ENCODE measurements at regions of chr7 and their contacts with region 1.

Region 1: DNA sequence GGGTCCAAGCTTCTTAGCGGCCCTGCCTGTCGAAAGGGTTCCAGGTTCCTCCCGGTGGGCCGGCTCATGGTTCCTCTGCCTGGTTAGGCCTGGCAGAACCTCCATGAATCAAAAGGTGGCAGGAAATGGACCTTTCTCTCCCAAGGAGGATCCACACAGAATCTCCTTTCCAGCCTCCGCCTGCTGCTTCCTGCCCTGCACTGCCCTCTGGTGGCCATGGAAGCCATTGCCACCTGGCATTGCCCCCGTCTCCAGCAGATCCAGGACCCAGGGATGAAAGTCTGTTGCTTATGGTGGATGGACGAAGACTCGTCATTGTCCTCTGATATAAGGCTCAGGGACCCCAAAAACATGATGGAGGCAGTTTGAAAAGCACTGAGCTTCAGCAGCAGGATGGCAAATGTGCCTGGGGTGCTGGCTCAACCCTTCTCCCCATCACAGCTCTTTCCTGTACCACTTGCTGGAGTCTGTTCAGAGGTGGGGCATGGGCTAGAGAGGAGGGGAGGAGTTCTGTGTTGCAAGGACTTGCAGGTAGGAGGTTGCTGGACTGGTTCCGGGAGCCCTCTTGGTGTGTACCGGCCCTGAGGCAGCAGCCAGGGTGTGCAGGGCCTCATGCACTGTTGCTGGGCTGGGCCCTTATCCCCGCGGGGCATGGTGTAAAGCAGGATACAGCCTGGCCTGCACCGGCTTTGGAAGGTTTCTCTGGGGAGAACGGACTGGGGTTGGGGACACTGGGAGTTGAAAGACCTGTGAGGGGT is 11.3 kb upstream of the INMT start:
- DNase-seq: peak; percentile 38
- H3K4me3 ChIP-seq: no peak overlapping the region
- H3K27ac ChIP-seq: no peak overlapping the region
- H3K4me1 ChIP-seq: no peaks in the 10 kb centered on the region
- H3K27me3 ChIP-seq: no peaks in the 10 kb centered on the region
- CTCF ChIP-seq: peak; percentile 99 to 100

Region 2: DNA sequence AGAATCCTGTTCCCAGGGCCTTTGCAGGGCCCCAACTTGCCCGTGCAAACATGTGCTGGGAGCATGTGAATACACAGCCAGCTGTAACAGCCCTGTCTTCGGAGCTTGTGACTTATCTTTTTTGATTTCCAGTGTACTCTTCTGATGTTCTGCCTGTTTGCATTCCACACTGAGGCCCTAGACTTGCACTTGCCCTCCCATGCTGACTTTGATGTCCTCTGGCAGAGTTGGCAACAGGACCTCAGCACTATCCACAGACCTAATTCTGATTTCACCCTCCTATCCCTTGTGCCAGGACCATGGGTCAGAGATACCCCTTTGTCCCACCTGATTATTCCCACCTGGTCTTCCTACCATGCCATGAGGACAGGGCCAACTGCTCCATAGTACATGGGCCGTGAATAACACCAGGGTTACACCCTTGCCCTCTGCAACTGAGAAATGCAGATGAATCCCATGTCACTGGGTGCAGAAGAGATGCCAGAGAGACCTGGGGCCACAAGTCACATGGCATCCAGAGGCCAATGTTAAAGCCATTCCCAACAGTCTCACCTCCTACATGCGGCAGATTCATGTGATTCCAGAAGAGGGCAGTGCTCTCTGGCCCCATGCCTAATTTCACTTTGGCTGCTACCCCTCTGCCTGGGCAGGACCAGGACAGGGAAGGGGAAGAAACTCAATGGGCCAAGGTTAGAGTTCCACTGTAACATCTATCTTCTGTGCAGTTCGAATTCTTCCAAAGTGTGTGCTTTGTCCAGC is 794.0 kb before region 1 on chr7:
- CTCF ChIA-PET with region 1: no interaction called
- dilution Hi-C with region 1: no loop called
- in situ Hi-C with region 1: no loop called
- intact Hi-C with region 1: no loop called
- DNase-seq: no peak
- H3K4me3 ChIP-seq: no peak overlapping the region
- H3K27ac ChIP-seq: no peak overlapping the region
- H3K4me1 ChIP-seq: peaks cover 13% of the 10 kb centered on the region
- H3K27me3 ChIP-seq: no peaks in the 10 kb centered on the region
- CTCF ChIP-seq: peak in 1 of 2 donors; percentile 42

Region 3: GRCh38 chr7:30510124-30511075 is 230.2 kb before region 1 on chr7:
- CTCF ChIA-PET with region 1: no interaction called
- dilution Hi-C with region 1: no loop called
- in situ Hi-C with region 1: no loop called
- intact Hi-C with region 1: loop called (anchors 1 kb)
- DNase-seq: peak; percentile 33
- H3K4me3 ChIP-seq: no peak overlapping the region
- H3K27ac ChIP-seq: no peak overlapping the region
- H3K4me1 ChIP-seq: peaks cover 13% of the 10 kb centered on the region
- H3K27me3 ChIP-seq: no peaks in the 10 kb centered on the region
- CTCF ChIP-seq: peak; percentile 80 to 92

Region 4: GRCh38 chr7:30594549-30595435 is 145.8 kb before region 1 on chr7 and contains the start of gene GARS1:
- CTCF ChIA-PET with region 1: no interaction called
- dilution Hi-C with region 1: no loop called
- in situ Hi-C with region 1: loop called in 1 of 2 experiments (anchors 5 kb)
- intact Hi-C with region 1: no loop called
- DNase-seq: peak; percentile 90
- H3K4me3 ChIP-seq: peak within 1 kb of the TSS; percentile 91 to 97 (median 93)
- H3K27ac ChIP-seq: peak within 1 kb of the TSS; percentile 92
- H3K4me1 ChIP-seq: peaks cover 8% of the 10 kb centered on the region
- H3K27me3 ChIP-seq: no peaks in the 10 kb centered on the region
- CTCF ChIP-seq: no peak
- total RNA-seq, gene GARS1: 419 to 470 TPM

Region 5: GRCh38 chr7:30650421-30650808 is 90.2 kb before region 1 on chr7:
- CTCF ChIA-PET with region 1: no interaction called
- dilution Hi-C with region 1: no loop called
- in situ Hi-C with region 1: no loop called
- intact Hi-C with region 1: loop called (anchors 5 kb)
- DNase-seq: no peak
- H3K4me3 ChIP-seq: no peak overlapping the region
- H3K27ac ChIP-seq: no peak overlapping the region
- H3K4me1 ChIP-seq: no peaks in the 10 kb centered on the region
- H3K27me3 ChIP-seq: no peaks in the 10 kb centered on the region
- CTCF ChIP-seq: no peak

Region 6: DNA sequence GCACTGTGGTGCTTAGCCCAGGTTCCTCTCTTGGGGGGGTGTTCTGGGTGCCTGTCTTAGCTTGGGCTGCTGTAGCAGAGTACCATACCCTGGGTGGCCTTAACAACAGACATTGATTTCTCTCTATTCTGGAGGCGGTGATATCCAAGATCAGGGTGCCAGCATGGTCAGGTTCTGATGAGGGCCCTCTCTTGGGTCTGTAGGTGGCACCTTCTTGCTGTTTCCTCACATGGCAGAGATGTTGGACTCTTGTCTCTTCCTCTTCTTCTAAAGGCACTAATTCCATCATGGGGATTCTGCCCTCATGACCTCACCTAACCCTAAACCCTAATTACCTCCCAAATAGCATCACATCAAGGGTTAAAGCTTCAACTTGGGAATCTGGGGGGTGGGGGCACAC is 38.4 kb before region 1 on chr7:
- CTCF ChIA-PET with region 1: no interaction called
- dilution Hi-C with region 1: no loop called
- in situ Hi-C with region 1: no loop called
- intact Hi-C with region 1: loop called (anchors 1 kb)
- DNase-seq: no peak
- H3K4me3 ChIP-seq: no peak overlapping the region
- H3K27ac ChIP-seq: no peak overlapping the region
- H3K4me1 ChIP-seq: no peaks in the 10 kb centered on the region
- H3K27me3 ChIP-seq: no peaks in the 10 kb centered on the region
- CTCF ChIP-seq: peak; percentile 16 to 45

Region 7: DNA sequence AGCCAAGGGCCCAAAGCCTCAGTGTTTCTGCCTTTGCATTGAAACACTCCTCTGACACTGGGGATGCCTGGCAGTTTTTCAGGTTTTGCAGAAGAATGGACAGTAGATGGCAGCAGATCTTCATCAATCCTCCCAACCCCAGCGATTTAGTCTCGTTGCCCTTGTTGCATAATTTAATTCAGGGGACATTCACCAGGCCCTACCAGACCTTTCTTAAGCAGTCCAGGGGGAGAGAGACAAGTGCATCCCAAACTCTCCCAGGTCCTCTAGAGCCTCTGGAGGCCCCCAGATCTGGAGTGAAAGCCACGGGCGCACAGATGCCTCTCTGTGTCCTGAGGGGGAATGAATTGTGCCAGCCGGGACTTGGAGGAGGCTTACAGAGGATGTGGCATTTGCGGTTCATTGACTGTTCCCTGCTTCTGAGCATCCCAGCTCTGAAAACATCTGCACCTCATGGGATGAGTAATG is 60.2 kb after region 1 on chr7:
- CTCF ChIA-PET with region 1: no interaction called
- dilution Hi-C with region 1: no loop called
- in situ Hi-C with region 1: no loop called
- intact Hi-C with region 1: loop called (anchors 1 kb)
- DNase-seq: peak; percentile 86
- H3K4me3 ChIP-seq: no peak overlapping the region
- H3K27ac ChIP-seq: peak overlapping the region; percentile 24
- H3K4me1 ChIP-seq: peaks cover 75% of the 10 kb centered on the region
- H3K27me3 ChIP-seq: no peaks in the 10 kb centered on the region
- CTCF ChIP-seq: peak; percentile 71 to 72

Region 8: DNA sequence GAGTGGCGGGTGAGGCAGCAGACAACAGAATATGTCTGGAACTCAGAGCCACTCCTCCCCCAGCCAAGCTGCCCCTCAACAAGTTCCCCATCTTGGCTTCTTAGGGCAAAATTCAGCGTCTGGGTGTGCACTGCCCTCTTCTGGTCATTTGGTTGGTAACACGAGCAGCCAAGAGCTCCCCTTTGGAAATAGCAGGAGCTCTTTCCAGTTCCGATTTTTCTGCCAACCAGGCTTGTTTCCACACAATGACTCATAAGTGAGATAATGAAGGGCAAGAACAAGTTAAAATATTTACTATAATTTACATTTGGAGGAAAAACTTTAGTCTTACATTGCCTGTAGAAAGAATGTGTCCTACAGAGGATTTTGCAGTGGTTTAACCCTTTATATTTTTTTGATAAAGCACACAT is 382.1 kb after region 1 on chr7:
- CTCF ChIA-PET with region 1: no interaction called
- dilution Hi-C with region 1: no loop called
- in situ Hi-C with region 1: no loop called
- intact Hi-C with region 1: loop called (anchors 1 kb)
- DNase-seq: peak; percentile 63
- H3K4me3 ChIP-seq: no peak overlapping the region
- H3K27ac ChIP-seq: no peak overlapping the region
- H3K4me1 ChIP-seq: no peaks in the 10 kb centered on the region
- H3K27me3 ChIP-seq: peaks cover 5% of the 10 kb centered on the region
- CTCF ChIP-seq: peak; percentile 89 to 91

Region 9: GRCh38 chr7:32164346-32164957 is 1423.8 kb after region 1 on chr7:
- CTCF ChIA-PET with region 1: no interaction called
- dilution Hi-C with region 1: no loop called
- in situ Hi-C with region 1: no loop called
- intact Hi-C with region 1: no loop called
- DNase-seq: peak; percentile 81
- H3K4me3 ChIP-seq: no peak overlapping the region
- H3K27ac ChIP-seq: no peak overlapping the region
- H3K4me1 ChIP-seq: peaks cover 35% of the 10 kb centered on the region
- H3K27me3 ChIP-seq: no peaks in the 10 kb centered on the region
- CTCF ChIP-seq: peak; percentile 71 to 79

Measured in mammary epithelial cell (primary cell).